Caco-2 (cell line): ENCODE measurements at regions of chr3 and their contacts with region 1.

Region 1: DNA sequence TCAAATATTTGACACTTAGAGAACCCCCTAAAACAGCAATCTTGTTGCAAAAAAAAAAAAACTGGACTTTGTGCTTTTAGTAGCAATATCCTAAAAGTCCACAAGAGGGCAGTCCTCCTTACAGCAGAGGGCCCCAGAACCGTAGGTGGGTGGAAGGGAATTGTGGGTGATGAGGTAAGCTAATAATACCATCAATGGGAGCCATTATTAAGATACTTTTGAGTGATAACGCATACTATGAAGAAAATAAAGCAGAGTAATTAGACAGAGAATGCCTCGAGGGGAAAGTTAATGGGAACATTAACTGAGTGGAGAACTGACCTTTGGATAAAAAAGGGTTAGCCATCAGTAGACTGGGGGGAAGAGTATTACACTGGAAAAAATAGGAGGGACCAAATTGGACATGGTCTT is 229.9 kb downstream of the THRB start:
- DNase-seq: peak in 1 of 2 experiments; percentile 53
- H3K4me3 ChIP-seq: no peak overlapping the region
- H3K4me3 Mint-ChIP-seq: no peak overlapping the region
- H3K27ac Mint-ChIP-seq: no peak overlapping the region
- H3K4me1 ChIP-seq: no peaks in the 10 kb centered on the region
- H3K4me1 Mint-ChIP-seq: peaks cover 6% of the 10 kb centered on the region
- H3K27me3 ChIP-seq: no peaks in the 10 kb centered on the region
- H3K27me3 Mint-ChIP-seq: no peaks in the 10 kb centered on the region
- CTCF ChIP-seq: peak; percentile 67 to 76

Region 2: GRCh38 chr3:24365194-24365612 is 100.5 kb after region 1 on chr3:
- CTCF ChIA-PET with region 1: no interaction called
- POLR2A ChIA-PET with region 1: no interaction called
- intact Hi-C with region 1: loop called (anchors 1 kb)
- DNase-seq: peak; percentile 15 to 44
- H3K4me3 ChIP-seq: no peak overlapping the region
- H3K4me3 Mint-ChIP-seq: no peak overlapping the region
- H3K27ac Mint-ChIP-seq: no peak overlapping the region
- H3K4me1 ChIP-seq: peaks cover 48% of the 10 kb centered on the region
- H3K4me1 Mint-ChIP-seq: peaks cover 20% of the 10 kb centered on the region
- H3K27me3 ChIP-seq: no peaks in the 10 kb centered on the region
- H3K27me3 Mint-ChIP-seq: no peaks in the 10 kb centered on the region
- CTCF ChIP-seq: no peak

Region 3: DNA sequence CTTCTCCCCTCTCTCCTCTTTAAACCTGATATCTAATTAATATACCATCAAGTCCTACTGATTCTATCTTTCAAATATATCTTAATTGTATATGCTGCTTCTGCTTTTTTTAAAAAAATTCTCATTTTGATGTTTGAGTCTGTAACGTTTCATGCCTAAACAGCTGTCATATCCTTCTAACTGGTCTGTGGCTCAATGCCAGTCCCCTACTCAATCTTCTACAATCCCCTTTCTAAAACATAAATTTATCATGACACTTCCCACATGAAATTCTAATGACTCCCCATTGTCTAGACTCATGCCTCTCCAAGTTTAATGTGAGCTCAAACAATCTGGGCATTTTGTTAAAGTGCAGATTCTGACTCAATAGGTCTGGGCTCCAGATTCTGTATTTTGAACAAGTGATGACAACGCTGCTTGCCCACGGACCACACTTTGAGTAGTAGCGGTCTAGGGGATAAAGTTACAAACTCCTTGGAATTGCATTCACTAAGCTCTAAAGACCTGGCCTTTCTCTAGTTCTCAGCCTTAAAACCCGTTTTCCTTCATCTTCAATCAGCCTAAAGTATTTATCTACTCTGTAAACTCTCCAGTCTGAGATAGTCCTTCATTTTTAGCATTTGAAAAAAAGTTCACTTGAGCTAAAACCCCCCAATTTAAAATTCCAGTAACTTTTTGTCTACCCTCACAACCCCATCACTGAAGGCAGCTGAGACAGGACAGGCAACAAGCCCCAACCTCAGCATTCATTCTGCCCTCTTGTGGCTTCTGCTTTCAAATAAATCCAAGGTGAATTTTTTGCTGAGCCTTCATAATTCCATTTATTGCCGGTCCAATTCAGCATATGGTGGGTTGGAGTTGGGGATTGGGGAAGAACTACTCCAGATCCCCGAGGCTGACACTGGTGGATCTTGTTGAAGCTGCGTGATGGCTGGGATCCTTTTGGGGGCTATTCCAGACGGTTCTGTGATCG is 318.0 kb after region 1 on chr3:
- CTCF ChIA-PET with region 1: interaction called, 4 read pairs
- POLR2A ChIA-PET with region 1: no interaction called
- intact Hi-C with region 1: loop called (anchors 1 kb)
- DNase-seq: peak in 1 of 2 experiments; percentile 12
- H3K4me3 ChIP-seq: no peak overlapping the region
- H3K4me3 Mint-ChIP-seq: no peak overlapping the region
- H3K27ac Mint-ChIP-seq: no peak overlapping the region
- H3K4me1 ChIP-seq: no peaks in the 10 kb centered on the region
- H3K4me1 Mint-ChIP-seq: peaks cover 7% of the 10 kb centered on the region
- H3K27me3 ChIP-seq: no peaks in the 10 kb centered on the region
- H3K27me3 Mint-ChIP-seq: no peaks in the 10 kb centered on the region
- CTCF ChIP-seq: no peak

Region 4: GRCh38 chr3:24640330-24640877 is 375.7 kb after region 1 on chr3:
- CTCF ChIA-PET with region 1: interaction called, 4 read pairs
- POLR2A ChIA-PET with region 1: no interaction called
- intact Hi-C with region 1: loop called (anchors 1 kb)
- DNase-seq: peak in 1 of 2 experiments; percentile 32
- H3K4me3 ChIP-seq: no peak overlapping the region
- H3K4me3 Mint-ChIP-seq: no peak overlapping the region
- H3K27ac Mint-ChIP-seq: peak overlapping the region; percentile 60
- H3K4me1 ChIP-seq: peaks cover 29% of the 10 kb centered on the region
- H3K4me1 Mint-ChIP-seq: peaks cover 15% of the 10 kb centered on the region
- H3K27me3 ChIP-seq: no peaks in the 10 kb centered on the region
- H3K27me3 Mint-ChIP-seq: no peaks in the 10 kb centered on the region
- CTCF ChIP-seq: peak; percentile 49 to 69